Activated T-helper 2 cell treated with anti-CD3 and anti-CD28 coated beads, Interferon-gamma antibody, Interleukin-2, Interleukin-4, amounts not matched to agents 10 μg/mL and 5 μg/mL and 100 μg/mL, durations not matched to agents 14 hours and 24 hours and 36 hours (primary cell): ENCODE measurements at regions of chr17 and their contacts with region 1.

Region 1: DNA sequence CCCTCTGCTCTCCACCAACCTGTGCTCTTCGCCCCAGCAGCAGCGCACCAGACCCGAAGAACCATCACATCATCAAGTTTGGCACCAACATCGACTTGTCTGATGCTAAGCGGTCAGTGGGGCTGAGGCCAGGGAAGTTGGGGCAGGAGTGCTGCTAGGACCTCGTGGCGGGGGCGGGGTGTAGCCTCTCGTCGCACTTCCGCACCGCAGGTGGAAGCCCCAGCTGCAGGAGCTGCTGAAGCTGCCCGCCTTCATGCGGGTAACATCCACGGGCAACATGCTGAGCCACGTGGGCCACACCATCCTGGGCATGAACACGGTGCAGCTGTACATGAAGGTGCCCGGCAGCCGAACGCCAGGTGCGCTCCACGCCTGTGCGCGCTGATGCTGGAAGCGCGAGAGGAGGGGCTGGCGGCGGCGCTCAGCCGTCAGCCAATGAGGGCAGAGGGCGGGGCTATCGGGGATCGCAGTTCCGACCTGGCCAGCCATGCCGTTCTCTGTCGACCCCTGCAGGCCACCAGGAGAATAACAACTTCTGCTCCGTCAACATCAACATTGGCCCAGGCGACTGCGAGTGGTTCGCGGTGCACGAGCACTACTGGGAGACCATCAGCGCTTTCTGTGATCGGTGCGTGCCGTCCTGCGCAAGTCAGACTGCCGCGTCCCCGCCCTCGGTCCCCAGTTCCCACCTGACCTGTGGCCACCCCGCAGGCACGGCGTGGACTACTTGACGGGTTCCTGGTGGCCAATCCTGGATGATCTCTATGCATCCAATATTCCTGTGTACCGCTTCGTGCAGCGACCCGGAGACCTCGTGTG is 3.2 kb upstream of the TMEM88 start:
- DNase-seq: peak; percentile 92
- H3K4me3 Mint-ChIP-seq: peak overlapping the region; percentile 61
- H3K27ac Mint-ChIP-seq: no peak overlapping the region
- H3K4me1 Mint-ChIP-seq: peaks cover 30% of the 10 kb centered on the region
- H3K27me3 Mint-ChIP-seq: no peaks in the 10 kb centered on the region

Region 2: DNA sequence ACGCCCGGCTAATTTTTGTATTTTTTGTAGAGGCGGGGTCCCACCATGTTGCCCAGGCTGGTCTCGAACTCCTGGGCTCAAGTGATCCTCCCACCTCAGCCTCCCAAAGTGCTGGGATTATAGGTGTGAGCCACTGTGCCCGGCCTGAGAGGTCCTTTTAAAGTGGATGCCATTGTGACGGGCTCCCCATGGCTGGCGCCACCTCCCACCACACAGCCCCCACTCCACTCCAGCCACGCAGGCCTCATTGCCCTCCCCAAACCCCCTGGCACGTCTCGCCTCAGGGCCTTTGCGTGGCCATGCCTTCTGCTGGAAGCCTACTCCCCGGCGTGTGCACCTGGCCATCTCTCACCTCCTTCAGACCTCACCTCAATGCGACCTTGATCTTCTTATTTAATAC is 29.5 kb before region 1 on chr17:
- intact Hi-C with region 1: loop called (anchors 1 kb)
- DNase-seq: no peak
- H3K4me3 Mint-ChIP-seq: no peak overlapping the region
- H3K27ac Mint-ChIP-seq: no peak overlapping the region
- H3K4me1 Mint-ChIP-seq: peaks cover 8% of the 10 kb centered on the region
- H3K27me3 Mint-ChIP-seq: peaks cover 9% of the 10 kb centered on the region

Region 3: DNA sequence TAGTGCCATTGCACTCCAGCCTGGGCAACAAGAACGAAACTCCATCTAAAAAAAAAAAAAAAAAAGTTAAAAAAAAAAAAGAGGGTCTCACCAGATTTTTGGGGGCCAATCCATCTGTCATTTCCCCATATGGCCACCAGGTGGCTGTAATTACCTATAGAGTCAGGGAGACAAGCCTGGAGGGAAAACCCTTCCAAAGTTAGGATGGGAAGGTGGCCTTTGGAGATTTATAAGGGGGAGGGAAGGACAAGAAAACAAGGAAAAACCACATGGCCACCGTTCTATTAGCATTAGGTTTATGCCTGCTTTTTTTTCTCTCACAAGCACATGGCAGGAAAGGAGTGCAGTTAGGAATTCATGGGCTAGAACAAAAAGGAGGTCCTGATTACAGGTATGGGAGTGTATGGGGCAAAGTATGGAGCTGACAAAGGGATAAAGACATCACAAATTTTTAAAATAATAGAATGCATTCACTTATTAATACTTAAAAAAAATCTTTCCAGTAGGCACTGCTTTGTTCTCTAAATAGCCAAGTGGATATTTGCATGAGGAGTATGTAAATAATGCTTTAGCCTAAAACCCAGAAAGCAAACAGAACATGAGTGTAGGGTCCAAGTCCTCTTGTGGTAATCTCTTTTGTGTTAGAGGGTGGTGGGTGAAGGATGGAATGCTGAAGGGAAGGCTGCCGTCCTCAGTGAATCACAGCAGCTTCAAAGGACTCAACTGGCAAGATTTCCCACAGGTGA is 11.2 kb after region 1 on chr17:
- intact Hi-C with region 1: no loop called
- DNase-seq: no peak
- H3K4me3 Mint-ChIP-seq: no peak overlapping the region
- H3K27ac Mint-ChIP-seq: peak overlapping the region; percentile 43
- H3K4me1 Mint-ChIP-seq: peaks cover 28% of the 10 kb centered on the region
- H3K27me3 Mint-ChIP-seq: no peaks in the 10 kb centered on the region